ENCODE measurements at regions of chr14 and their contacts with region 1.

Region 1: DNA sequence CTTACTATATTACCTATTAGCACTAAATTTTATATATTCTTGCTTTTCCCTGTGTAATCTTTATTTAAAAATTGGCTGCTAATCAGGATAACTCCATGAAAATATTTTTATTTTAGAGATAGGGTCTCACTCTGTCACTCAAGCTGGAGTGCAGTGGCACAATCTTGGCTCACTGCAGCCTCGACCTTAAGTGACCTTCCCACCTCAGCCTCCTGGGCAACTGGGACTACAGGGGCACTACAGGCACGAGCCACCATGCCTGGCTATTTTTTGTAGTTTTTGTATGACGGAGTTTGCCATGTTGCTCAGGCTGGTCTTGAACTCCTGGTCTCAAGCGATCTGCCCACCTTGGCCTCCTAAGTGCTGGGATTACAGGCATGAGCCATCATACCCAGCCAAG is 32.4 kb upstream of the VCPKMT start:
- DNase-seq: no peak
- H3K4me3 ChIP-seq: no peak overlapping the region
- H3K27ac ChIP-seq: no peak overlapping the region
- H3K27me3 ChIP-seq: no peaks in the 10 kb centered on the region
- CTCF ChIP-seq: no peak

Region 2: GRCh38 chr14:49828640-49829039 is 320.2 kb before region 1 on chr14:
- CTCF ChIA-PET with region 1: no interaction called
- POLR2A ChIA-PET with region 1: interaction called, 11 read pairs
- DNase-seq: no peak
- H3K4me3 ChIP-seq: no peak overlapping the region
- H3K27ac ChIP-seq: no peak overlapping the region
- H3K27me3 ChIP-seq: no peaks in the 10 kb centered on the region
- CTCF ChIP-seq: no peak

Region 3: DNA sequence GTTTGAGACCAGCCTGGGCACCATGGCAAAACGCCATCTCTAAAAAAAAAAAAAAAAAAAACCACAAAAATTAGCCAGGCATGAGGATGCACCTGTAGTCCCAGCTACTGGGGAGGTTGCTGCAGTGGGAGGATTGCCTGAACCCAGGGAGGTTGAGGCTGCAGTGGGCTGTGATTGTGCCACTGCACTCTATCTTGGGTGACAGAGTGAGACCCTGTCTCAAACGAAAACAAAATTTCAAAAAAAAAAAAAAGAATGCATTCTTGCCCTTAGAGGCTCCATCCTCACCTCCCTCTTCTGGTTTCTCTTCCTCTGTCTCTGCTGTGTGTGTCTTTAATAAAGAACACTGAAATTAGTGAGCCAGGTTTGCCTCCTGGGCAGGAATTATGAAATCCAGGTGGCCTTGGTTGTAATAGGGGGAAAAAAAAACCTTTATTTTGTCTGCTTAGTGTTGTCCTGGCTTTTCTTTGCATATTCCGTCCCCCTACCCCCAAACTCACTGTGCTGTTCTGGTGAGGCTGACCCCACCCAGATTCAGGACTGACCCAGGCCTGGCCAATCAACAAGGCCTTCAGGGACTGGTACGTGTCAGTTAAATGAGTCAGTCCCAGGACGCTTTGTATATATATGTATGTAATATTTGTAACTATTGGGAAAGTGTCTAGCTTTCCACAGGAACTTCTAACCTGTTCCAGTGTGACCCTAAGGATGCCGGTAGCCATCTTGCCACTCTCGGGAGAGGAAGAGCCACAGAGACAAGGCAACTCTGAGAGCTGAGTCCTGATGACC is 140.0 kb before region 1 on chr14:
- CTCF ChIA-PET with region 1: no interaction called
- POLR2A ChIA-PET with region 1: no interaction called
- DNase-seq: no peak
- H3K4me3 ChIP-seq: no peak overlapping the region
- H3K27ac ChIP-seq: peak overlapping the region; percentile 31
- H3K27me3 ChIP-seq: no peaks in the 10 kb centered on the region
- CTCF ChIP-seq: no peak